HEK293 (cell line): ENCODE measurements at regions of chr12 and their contacts with region 1.

Region 1: DNA sequence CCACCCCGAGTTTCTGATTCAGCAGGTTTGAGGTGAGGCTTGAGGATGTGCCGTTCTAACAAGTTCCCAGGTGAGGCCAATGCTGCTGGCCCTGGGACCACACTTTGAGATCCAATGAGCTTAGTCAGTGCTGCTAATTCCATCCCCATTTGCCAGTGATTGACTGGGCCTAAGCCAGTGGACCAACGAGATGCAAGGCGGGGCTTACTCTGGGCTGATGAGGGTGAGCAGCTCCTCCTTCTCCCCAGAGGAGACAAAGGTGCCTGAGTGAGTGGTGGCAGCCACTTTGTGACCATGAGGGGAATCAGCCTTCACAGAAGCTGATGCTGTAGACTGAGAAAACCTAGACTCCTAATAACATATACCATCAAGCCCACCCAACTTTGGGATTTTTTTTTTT is 23.1 kb upstream of the HNF1A start:
- H3K4me3 ChIP-seq: no peak overlapping the region
- H3K27ac ChIP-seq: no peak overlapping the region
- H3K4me1 ChIP-seq: no peaks in the 10 kb centered on the region
- CTCF ChIP-seq: no peak

Region 2: DNA sequence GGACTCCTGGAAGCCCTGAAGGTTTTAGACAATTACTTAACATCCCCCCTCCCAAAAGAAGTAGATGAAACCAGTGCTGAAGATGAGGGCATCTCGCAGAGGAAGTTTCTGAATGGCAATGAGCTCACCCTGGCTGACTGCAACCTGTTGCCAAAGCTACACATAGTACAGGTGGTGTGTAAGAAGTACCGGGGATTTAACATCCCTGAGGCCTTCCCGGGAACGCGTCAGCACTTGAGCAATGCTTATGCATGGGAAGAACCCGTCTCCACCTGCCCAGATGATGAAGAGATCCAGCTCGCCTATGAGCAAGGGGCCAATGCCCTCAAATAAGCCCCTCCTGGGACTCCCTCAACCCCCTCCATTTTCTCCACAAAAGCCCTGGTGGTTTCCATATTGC is 40.4 kb before region 1 on chr12:
- CTCF ChIA-PET with region 1: no interaction called
- POLR2A ChIA-PET with region 1: interaction called, 10 read pairs
- H3K4me3 ChIP-seq: no peak overlapping the region
- H3K27ac ChIP-seq: no peak overlapping the region
- H3K4me1 ChIP-seq: no peaks in the 10 kb centered on the region
- CTCF ChIP-seq: no peak

Region 3: GRCh38 chr12:120978296-120979219 is 23.3 kb after region 1 on chr12 and contains the start of gene HNF1A:
- CTCF ChIA-PET with region 1: no interaction called
- POLR2A ChIA-PET with region 1: no interaction called
- H3K4me3 ChIP-seq: no peak within 1 kb of the TSS
- H3K27ac ChIP-seq: no peak within 1 kb of the TSS
- H3K4me1 ChIP-seq: no peaks in the 10 kb centered on the region
- CTCF ChIP-seq: no peak